Activated CD4-positive, alpha-beta T cell treated with anti-CD3 and anti-CD28 coated beads, Interleukin-2, amount 10 ng/mL, durations not matched to agents 24 days and 14 days (primary cell): ENCODE measurements at regions of chr2 and their contacts with region 1.

Region 1: GRCh38 chr2:99337113-99338028 is at the start of gene EIF5B:
- DNase-seq: peak; percentile 98
- H3K4me3 Mint-ChIP-seq: no peak within 1 kb of the TSS
- H3K27ac Mint-ChIP-seq: no peak within 1 kb of the TSS
- H3K4me1 Mint-ChIP-seq: peaks cover 36% of the 10 kb centered on the region
- H3K27me3 Mint-ChIP-seq: no peaks in the 10 kb centered on the region
- total RNA-seq, gene EIF5B: 86.5 and 88.5 TPM in 2 replicates

Region 2: DNA sequence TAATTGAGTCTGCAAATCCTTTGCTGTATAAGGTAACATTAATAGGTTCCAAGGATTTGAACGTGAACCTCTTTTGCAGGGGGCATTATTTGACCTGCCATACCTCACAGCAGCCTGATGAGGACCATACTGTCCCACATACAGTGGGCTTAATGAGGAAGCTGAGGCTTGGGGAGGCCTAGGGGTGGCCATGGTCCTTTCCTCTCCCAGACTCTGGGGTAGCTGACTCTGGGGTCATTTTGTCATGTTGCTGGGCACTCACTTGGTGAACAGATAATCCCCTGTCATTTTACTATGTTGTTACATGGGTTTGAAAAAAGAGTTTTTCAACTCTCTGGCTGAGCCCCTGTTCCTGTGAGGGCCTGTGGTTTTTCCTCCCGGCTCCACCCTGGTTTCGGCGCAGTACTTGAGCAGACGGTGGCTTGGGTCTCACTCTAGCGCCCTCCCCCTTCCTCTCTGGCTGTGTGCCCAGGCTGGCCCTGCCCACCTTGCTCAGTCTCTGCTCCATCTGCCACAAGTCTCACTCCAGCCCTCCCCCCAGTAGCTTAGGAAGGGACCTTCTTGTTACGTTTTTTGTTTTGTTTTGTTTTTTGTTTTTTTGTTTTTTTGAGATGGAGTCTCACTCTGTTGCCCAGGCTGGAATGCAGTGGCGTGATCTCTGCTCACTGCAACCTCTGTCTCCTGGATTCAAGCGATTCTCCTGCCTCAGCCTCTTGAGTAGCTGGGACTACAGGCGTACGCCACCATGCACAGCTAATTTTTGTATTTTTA is 871.7 kb before region 1 on chr2:
- intact Hi-C with region 1: loop called (anchors 5 kb)
- DNase-seq: peak; percentile 93
- H3K4me3 Mint-ChIP-seq: peak overlapping the region; percentile 71
- H3K27ac Mint-ChIP-seq: peak overlapping the region; percentile 89
- H3K4me1 Mint-ChIP-seq: peaks cover 76% of the 10 kb centered on the region
- H3K27me3 Mint-ChIP-seq: no peaks in the 10 kb centered on the region

Region 3: DNA sequence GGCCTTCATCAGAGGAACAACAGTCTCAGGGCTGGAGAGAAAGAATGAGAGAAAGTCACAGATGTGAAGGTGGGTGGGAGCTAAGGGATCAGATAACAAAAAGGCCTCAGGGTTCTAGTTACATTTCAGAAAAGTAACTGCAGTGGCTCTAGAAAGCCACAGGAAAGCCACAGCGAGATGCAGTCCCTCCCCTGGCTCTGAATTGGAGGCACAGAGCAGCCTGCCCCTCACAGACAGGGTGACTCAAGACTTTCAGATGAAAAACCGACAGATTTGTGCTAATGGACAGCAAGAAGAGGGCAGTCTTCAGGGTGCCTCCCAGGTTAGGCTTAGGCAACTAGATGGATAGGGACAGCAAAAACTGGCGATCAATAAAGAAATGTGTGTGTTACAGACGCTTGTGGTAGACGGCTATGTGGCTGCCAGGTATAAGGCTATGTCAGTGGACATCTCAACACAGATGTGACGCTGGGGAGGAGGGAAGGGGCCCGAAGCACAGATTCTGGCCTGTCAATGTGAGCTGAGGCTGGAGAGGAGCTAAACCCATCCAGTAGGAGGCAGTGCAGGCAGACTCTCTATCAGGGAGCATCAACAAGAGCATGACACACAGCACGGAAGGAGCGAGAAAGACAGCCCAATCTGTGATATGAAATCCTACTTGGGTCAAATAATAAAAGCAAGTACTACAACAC is 702.8 kb before region 1 on chr2:
- intact Hi-C with region 1: loop called (anchors 10 kb)
- DNase-seq: peak; percentile 80
- H3K4me3 Mint-ChIP-seq: peak overlapping the region; percentile 42
- H3K27ac Mint-ChIP-seq: peak overlapping the region; percentile 82
- H3K4me1 Mint-ChIP-seq: peaks cover 30% of the 10 kb centered on the region
- H3K27me3 Mint-ChIP-seq: no peaks in the 10 kb centered on the region

Region 4: DNA sequence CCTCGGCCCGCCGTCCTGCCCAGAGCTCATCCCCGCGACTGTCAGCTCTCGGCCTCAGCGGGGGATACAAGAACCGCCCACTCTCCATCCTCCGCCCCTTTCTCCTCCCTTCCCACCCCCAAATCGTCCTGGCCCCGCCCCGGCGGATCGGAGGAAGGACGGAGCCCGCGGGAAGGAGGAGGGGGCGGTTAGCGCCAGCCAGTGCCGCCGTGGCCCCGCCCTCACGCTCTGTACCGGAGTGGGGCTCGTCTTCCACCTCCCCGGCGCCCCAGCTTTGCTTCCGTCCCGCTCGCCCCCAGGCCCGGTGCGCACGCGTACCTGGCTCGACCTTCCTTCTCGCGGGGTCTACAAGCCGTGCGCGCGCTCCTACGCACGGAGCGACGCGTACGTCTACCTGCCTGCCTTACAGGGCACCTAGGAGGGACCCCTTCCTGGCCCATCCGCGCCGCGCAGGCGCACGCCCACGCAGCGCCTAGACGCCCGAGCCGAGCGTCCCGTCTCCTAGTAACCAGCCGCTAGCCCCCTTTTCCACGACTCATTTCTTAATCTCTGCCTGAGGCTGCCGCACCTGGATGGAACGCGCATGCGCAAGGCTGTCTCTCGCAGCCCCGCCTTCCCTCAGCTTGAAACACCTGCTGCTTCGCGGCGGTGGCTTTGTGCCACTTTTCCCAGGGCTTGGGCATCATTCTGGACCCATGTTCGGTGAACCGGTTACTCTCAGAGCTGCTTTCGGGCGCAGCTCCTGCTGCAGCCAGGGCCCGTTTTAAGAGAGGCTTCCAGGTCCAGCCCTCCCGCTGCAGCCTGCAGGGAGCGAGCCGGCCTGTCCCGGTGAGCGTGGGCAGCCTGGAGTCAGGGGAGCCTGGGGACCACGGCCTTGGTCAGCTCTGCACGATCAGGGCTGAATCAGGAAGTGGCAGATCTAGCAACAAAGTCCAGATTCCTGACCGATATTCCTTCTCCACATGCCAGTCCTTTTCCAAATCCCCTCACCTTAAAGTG is 196.0 kb before region 1 on chr2 and contains the start of gene C2orf15:
- intact Hi-C with region 1: loop called (anchors 1 kb)
- DNase-seq: peak; percentile 98
- H3K4me3 Mint-ChIP-seq: peak within 1 kb of the TSS; percentile 95
- H3K27ac Mint-ChIP-seq: peak within 1 kb of the TSS; percentile 91
- H3K4me1 Mint-ChIP-seq: peaks cover 22% of the 10 kb centered on the region
- H3K27me3 Mint-ChIP-seq: peaks cover 29% of the 10 kb centered on the region
- total RNA-seq, gene C2orf15: 0.26 and 0.40 TPM in 2 replicates

Region 5: DNA sequence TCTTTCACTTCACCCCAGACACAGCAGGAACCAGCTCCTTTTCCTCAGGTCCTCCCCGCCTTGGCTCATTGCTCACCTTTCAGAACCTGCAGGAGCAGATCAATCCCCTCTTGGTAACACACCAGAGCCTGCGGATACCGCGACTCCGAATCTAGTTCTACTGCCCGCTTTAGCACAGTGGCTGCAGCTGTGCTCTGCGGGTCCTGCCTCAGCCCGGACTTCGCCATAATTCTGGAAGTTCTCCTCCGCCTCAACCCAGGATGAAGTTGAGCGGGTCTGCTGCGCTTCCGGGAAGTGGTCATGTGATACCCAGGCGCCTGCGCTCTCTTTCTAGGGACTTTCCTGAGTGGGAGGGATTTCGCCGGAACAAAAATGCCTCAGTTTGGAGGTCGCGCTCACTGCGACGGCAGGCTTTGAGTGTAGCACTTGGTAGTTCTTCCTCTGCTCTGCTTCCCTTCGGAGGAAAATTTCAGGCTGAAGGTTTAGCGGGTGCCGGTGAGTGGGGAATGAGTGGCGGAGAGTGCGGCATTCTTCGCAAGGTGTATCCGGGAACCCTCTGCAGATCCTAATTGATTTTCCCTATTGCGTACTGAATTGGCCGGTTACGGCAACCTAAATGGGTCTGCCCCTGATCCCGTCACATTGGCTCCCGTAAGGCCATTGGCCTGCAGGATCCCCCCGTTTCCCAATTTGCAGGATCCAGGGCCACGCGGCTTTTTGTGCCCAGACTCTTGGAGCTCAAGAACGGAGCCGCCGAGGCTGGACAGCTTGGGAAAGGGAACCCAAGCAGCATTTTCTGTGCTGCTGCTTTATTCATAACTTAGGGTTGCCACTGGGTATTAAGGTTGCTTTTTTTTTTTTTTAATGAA is 156.4 kb before region 1 on chr2 and contains the starts of genes MITD1 and MRPL30:
- intact Hi-C with region 1: loop called (anchors 1 kb)
- DNase-seq: peak; percentile 97
- H3K4me3 Mint-ChIP-seq: peak within 1 kb of the TSS; percentile 100
- H3K27ac Mint-ChIP-seq: peak within 1 kb of the TSS; percentile 97
- H3K4me1 Mint-ChIP-seq: peaks cover 43% of the 10 kb centered on the region
- H3K27me3 Mint-ChIP-seq: no peaks in the 10 kb centered on the region
- total RNA-seq, gene MITD1: 49.9 and 52.8 TPM in 2 replicates
- total RNA-seq, gene MRPL30: 29.0 and 31.2 TPM in 2 replicates

Region 6: DNA sequence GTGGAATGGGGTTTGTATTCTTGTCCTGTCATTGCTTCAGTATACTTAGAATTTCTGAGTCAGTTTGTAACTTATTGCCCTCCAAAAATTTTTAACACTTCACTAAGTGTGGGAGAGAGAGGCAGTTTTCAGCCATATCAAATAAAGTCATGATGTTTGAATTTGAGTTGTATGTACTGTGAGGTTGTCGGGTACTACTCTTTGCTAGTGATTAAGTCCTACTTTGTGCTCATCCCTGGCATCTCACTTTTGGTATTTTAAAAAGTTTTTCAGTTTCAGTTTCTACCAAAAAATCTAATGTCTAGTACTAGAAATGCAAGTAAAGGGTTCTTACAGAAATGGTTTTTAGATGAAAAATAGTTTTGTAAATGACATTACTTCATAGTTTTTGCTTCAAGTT is 40.5 kb after region 1 on chr2:
- intact Hi-C with region 1: loop called (anchors 5 kb)
- DNase-seq: no peak
- H3K4me3 Mint-ChIP-seq: no peak overlapping the region
- H3K27ac Mint-ChIP-seq: peak overlapping the region; percentile 47
- H3K4me1 Mint-ChIP-seq: peaks cover 23% of the 10 kb centered on the region
- H3K27me3 Mint-ChIP-seq: no peaks in the 10 kb centered on the region

Region 7: DNA sequence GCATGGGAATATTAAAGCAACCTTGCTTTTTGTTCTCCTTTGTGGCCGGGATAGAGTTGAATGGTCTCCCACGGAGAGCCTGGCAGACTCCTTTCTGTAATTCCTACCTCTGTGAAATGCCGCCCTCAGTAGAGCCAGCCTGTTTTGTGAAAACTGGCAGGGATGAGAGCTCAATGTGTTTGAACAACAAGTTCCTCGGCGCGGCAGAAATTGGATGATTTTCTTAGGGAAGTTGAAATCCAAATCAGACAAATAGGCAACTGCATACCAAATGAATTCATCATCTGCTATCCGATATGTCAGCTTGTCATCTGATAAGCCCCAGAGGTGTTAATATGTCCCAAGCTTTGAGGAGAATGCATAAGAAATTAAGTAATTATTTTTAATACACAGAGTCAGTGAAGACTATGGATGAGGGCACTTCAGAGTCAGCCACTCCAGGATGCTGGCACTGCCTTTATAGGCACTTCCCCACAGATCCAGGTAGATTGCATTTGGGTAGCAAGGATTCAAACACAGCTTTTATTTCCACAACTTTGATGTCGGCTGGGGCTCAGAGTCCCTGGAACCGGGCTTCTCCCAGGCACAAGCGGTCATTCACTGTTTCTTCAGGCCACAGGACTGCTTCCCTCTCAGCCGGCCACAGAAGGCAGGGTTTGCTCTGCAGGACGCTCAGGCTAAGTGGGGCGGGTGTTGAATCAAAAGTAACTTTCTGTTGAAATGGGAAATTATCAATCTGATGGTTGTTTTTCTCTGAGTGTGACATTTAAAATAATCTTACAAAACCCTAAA is 235.2 kb after region 1 on chr2:
- intact Hi-C with region 1: no loop called
- DNase-seq: no peak
- H3K4me3 Mint-ChIP-seq: no peak overlapping the region
- H3K27ac Mint-ChIP-seq: no peak overlapping the region
- H3K4me1 Mint-ChIP-seq: no peaks in the 10 kb centered on the region
- H3K27me3 Mint-ChIP-seq: no peaks in the 10 kb centered on the region